Aorta (tissue), 5 donors: ENCODE measurements at regions of chr22 and their contacts with region 1.

Region 1: GRCh38 chr22:17171313-17172171 is 12.5 kb upstream of the HDHD5 start:
- DNase-seq: peak; percentile 94 to 98
- ATAC-seq: peak; percentile 96
- H3K4me3 ChIP-seq: peak overlapping the region; percentile 33 to 88
- H3K27ac ChIP-seq: peak overlapping the region; percentile 38 to 88
- H3K4me1 ChIP-seq: no peaks in the 10 kb centered on the region
- H3K27me3 ChIP-seq: no peaks in the 10 kb centered on the region

Region 2: GRCh38 chr22:17074648-17075002 is 96.9 kb before region 1 on chr22:
- intact Hi-C with region 1: loop called in 1 of 2 experiments (anchors 5 kb)
- DNase-seq: no peak
- ATAC-seq: no peak
- H3K4me3 ChIP-seq: no peak overlapping the region
- H3K27ac ChIP-seq: no peak overlapping the region
- H3K4me1 ChIP-seq: no peaks in the 10 kb centered on the region
- H3K27me3 ChIP-seq: no peaks in the 10 kb centered on the region

Region 3: GRCh38 chr22:17084554-17085276 is 86.8 kb before region 1 on chr22 and contains the start of gene IL17RA:
- intact Hi-C with region 1: loop called in 1 of 2 experiments (anchors 5 kb)
- DNase-seq: peak; percentile 95 to 96
- ATAC-seq: peak; percentile 97
- H3K4me3 ChIP-seq: peak within 1 kb of the TSS; percentile 71 to 95
- H3K27ac ChIP-seq: peak within 1 kb of the TSS in 1 of 2 donors; percentile 35
- H3K4me1 ChIP-seq: peaks cover 0 to 4% of the 10 kb centered on the region in 2 donors
- H3K27me3 ChIP-seq: no peaks in the 10 kb centered on the region
- total RNA-seq, gene IL17RA: 19.9 to 28.3 TPM

Region 4: GRCh38 chr22:17501679-17502285 is 330.2 kb after region 1 on chr22:
- intact Hi-C with region 1: loop called in 1 of 2 experiments (anchors 5 kb)
- DNase-seq: no peak
- ATAC-seq: no peak
- H3K4me3 ChIP-seq: no peak overlapping the region
- H3K27ac ChIP-seq: no peak overlapping the region
- H3K4me1 ChIP-seq: no peaks in the 10 kb centered on the region
- H3K27me3 ChIP-seq: no peaks in the 10 kb centered on the region

Region 5: GRCh38 chr22:17628304-17629166 is 457.0 kb after region 1 on chr22 and contains the start of gene ATP6V1E1:
- intact Hi-C with region 1: loop called in 1 of 2 experiments (anchors 5 kb)
- DNase-seq: peak; percentile 98
- ATAC-seq: peak; percentile 100
- H3K4me3 ChIP-seq: peak within 1 kb of the TSS; percentile 48 to 93
- H3K27ac ChIP-seq: peak within 1 kb of the TSS; percentile 89 to 94
- H3K4me1 ChIP-seq: no peaks in the 10 kb centered on the region
- H3K27me3 ChIP-seq: no peaks in the 10 kb centered on the region
- total RNA-seq, gene ATP6V1E1: 93.0 to 116 TPM

Region 6: DNA sequence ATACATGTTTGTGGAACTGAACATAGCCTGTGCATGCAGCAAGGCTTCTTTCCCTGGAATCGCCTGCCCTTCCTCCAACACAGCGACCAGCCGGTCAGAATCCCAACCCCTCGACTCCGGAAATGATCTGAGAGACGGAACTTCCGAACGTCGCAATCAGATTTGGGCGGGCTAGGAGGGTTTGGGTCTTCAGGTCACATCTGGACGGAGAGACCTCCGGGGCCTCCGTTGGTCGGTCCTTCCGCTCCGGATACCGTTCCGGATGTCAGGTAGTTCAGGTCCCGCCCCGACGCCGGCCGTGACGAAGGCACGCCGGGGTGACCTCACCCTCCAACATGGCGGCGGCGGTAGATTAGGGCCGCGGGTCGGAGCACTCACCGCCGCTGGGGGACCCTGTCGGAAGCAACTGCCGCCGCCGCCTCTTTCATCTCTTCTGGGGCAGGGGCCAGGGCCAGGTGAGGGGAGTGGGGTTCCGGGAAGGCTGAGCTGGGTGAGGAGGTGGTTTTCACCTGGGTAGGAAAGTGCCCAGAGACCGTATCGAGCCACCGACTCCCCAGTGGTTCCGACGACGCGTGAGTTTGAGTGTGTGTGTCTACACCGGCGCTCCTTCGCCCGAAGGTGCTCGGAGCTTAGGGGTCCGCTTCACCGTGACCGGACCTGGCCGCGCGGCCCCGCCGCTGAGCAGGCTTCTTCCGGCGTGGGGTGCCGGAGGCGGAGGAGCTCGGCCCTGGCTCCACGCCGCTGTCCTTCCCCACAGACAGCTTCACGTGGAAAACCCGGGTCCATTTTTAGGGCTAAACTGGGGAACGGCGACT is 467.1 kb after region 1 on chr22 and contains the start of gene BCL2L13:
- intact Hi-C with region 1: loop called in 1 of 2 experiments (anchors 5 kb)
- DNase-seq: peak; percentile 93 to 96
- ATAC-seq: peak; percentile 99
- H3K4me3 ChIP-seq: peak within 1 kb of the TSS; percentile 44 to 90
- H3K27ac ChIP-seq: peak within 1 kb of the TSS; percentile 64 to 97
- H3K4me1 ChIP-seq: no peaks in the 10 kb centered on the region
- H3K27me3 ChIP-seq: no peaks in the 10 kb centered on the region
- total RNA-seq, gene BCL2L13: 31.7 to 39.9 TPM